ENCODE measurements at regions of chr16 and their contacts with region 1.

Region 1: GRCh38 chr16:66830422-66831404 is at the start of gene NAE1:
- DNase-seq: peak; percentile 82 to 97 (median 93)
- ATAC-seq: peak; percentile 99
- H3K4me3 ChIP-seq: peak within 1 kb of the TSS; percentile 84
- H3K4me3 Mint-ChIP-seq: peak within 1 kb of the TSS; percentile 75 to 89 (median 79)
- H3K27ac ChIP-seq: peak within 1 kb of the TSS; percentile 78
- H3K27ac Mint-ChIP-seq: peak within 1 kb of the TSS in 8 of 9 donors; percentile 32 to 86 (median 59)
- H3K4me1 ChIP-seq: peaks cover 19 to 28% of the 10 kb centered on the region in 2 donors
- H3K4me1 Mint-ChIP-seq: peaks cover 15 to 36% (median 34%) of the 10 kb centered on the region in 7 donors
- H3K27me3 ChIP-seq: no peaks in the 10 kb centered on the region
- H3K27me3 Mint-ChIP-seq: no peaks in the 10 kb centered on the region
- total RNA-seq, gene NAE1: 62.3 to 96.6 (median 90.7) TPM

Region 2: GRCh38 chr16:66872943-66873684 is 42.4 kb after region 1 on chr16:
- CTCF ChIA-PET with region 1: interaction called, 15 read pairs
- POLR2A ChIA-PET with region 1: interaction called, 15 read pairs
- intact Hi-C with region 1: loop called (anchors 1 to 2 kb)
- DNase-seq: peak; percentile 62 to 93 (median 77)
- ATAC-seq: peak; percentile 95
- H3K4me3 ChIP-seq: peak overlapping the region; percentile 48
- H3K4me3 Mint-ChIP-seq: peak overlapping the region; percentile 77 to 94 (median 82)
- H3K27ac ChIP-seq: peak overlapping the region; percentile 18
- H3K27ac Mint-ChIP-seq: peak overlapping the region; percentile 7 to 93 (median 60)
- H3K4me1 ChIP-seq: peaks cover 5 to 6% of the 10 kb centered on the region in 2 donors
- H3K4me1 Mint-ChIP-seq: peaks cover 7 to 49% (median 14%) of the 10 kb centered on the region in 7 donors
- H3K27me3 ChIP-seq: no peaks in the 10 kb centered on the region
- H3K27me3 Mint-ChIP-seq: no peaks in the 10 kb centered on the region

Region 3: GRCh38 chr16:66880288-66881013 is 49.7 kb after region 1 on chr16 and contains the start of gene PDP2:
- CTCF ChIA-PET with region 1: interaction called, 8 read pairs
- POLR2A ChIA-PET with region 1: interaction called, 21 read pairs
- intact Hi-C with region 1: no loop called
- DNase-seq: peak; percentile 73 to 92 (median 90)
- ATAC-seq: peak; percentile 99
- H3K4me3 ChIP-seq: peak within 1 kb of the TSS; percentile 86
- H3K4me3 Mint-ChIP-seq: peak within 1 kb of the TSS; percentile 92 to 100 (median 99)
- H3K27ac ChIP-seq: peak within 1 kb of the TSS; percentile 67
- H3K27ac Mint-ChIP-seq: peak within 1 kb of the TSS; percentile 89 to 98 (median 92)
- H3K4me1 ChIP-seq: peaks cover 4 to 12% of the 10 kb centered on the region in 2 donors
- H3K4me1 Mint-ChIP-seq: peaks cover 16 to 51% (median 31%) of the 10 kb centered on the region in 7 donors
- H3K27me3 ChIP-seq: no peaks in the 10 kb centered on the region
- H3K27me3 Mint-ChIP-seq: no peaks in the 10 kb centered on the region
- total RNA-seq, gene PDP2: 4.5 to 24.0 (median 15.9) TPM

Region 4: GRCh38 chr16:66924527-66925321 is 94.0 kb after region 1 on chr16:
- CTCF ChIA-PET with region 1: no interaction called
- POLR2A ChIA-PET with region 1: interaction called, 4 read pairs
- intact Hi-C with region 1: loop called in 1 of 2 experiments (anchors 5 kb)
- DNase-seq: peak in 5 of 9 donors; percentile 18 to 71 (median 34)
- ATAC-seq: peak; percentile 79
- H3K4me3 ChIP-seq: no peak overlapping the region
- H3K4me3 Mint-ChIP-seq: peak overlapping the region in 8 of 10 donors; percentile 33 to 74 (median 64)
- H3K27ac ChIP-seq: no peak overlapping the region
- H3K27ac Mint-ChIP-seq: no peak overlapping the region
- H3K4me1 ChIP-seq: no peaks in the 10 kb centered on the region
- H3K4me1 Mint-ChIP-seq: peaks cover 0 to 24% (median 5%) of the 10 kb centered on the region in 7 donors
- H3K27me3 ChIP-seq: peaks cover 0 to 13% of the 10 kb centered on the region in 2 donors
- H3K27me3 Mint-ChIP-seq: peaks cover 18 to 43% (median 22%) of the 10 kb centered on the region in 5 donors

Region 5: GRCh38 chr16:67100569-67101310 is 270.0 kb after region 1 on chr16:
- CTCF ChIA-PET with region 1: no interaction called
- POLR2A ChIA-PET with region 1: no interaction called
- intact Hi-C with region 1: no loop called
- DNase-seq: peak in 5 of 9 donors; percentile 11 to 48 (median 26)
- ATAC-seq: no peak
- H3K4me3 ChIP-seq: no peak overlapping the region
- H3K4me3 Mint-ChIP-seq: no peak overlapping the region
- H3K27ac ChIP-seq: no peak overlapping the region
- H3K27ac Mint-ChIP-seq: peak overlapping the region in 1 of 9 donors; percentile 41
- H3K4me1 ChIP-seq: no peaks in the 10 kb centered on the region
- H3K4me1 Mint-ChIP-seq: peaks cover 0 to 8% (median 0%) of the 10 kb centered on the region in 7 donors
- H3K27me3 ChIP-seq: no peaks in the 10 kb centered on the region
- H3K27me3 Mint-ChIP-seq: no peaks in the 10 kb centered on the region

Measured in naive thymus-derived CD4-positive, alpha-beta T cell (primary cell).